AG04449 (cell line): ENCODE measurements at regions of chr18 and their contacts with region 1.

Region 1: DNA sequence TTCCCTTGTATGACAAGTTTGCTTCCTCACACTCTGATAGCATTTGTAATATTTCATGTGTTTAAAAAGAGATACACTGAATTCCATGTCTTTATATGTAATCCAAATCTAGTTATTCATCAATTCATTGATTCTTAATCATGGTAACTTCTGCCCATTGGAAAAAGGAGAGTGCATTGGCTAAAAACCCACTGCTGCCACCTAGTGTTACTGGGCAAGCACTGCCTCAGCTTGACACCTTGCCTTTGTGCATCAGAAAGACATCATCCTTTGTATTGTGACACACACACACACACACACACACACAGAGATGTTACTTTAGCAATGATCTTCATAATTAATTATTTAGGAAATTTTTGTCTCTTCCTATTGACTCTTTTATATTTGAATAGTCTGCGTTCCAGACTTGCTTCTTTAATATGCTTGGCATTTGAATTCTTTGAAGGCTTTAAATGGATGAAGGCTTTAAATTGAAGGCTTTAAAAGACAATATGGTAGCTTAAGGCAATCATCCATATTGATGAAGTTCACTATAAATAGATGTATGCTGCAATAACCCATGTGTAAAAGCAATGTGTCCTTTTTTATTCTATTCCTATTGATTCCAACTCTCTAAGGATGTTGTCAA is 414.2 kb upstream of the CHST9 start:
- DNase-seq: no peak
- H3K4me3 ChIP-seq: no peak overlapping the region
- CTCF ChIP-seq: peak; percentile 89

Region 2: GRCh38 chr18:27017901-27018500 is 581.3 kb before region 1 on chr18:
- CTCF ChIA-PET with region 1: interaction called, 10 read pairs
- POLR2A ChIA-PET with region 1: no interaction called
- DNase-seq: no peak
- H3K4me3 ChIP-seq: no peak overlapping the region
- CTCF ChIP-seq: peak; percentile 28

Region 3: DNA sequence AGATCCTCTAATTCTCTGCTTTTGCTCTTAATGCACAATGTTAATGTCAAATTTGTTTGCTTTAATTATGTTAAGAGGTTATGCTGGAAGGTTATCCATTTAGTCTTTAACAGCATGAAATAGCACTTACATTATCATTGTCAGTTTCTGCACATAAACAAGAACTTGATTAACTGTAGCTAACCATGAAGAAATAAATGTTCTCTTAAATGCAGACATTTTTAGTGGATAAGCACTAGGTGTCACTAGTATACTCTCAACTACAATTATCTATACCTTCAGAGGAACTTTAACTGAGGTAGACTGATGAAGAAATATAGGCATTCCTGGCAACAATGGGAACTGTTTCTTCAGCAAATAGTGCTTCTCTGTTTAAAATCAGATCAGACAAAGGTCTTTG is 235.4 kb before region 1 on chr18:
- CTCF ChIA-PET with region 1: interaction called, 20 read pairs
- POLR2A ChIA-PET with region 1: no interaction called
- DNase-seq: no peak
- H3K4me3 ChIP-seq: no peak overlapping the region
- CTCF ChIP-seq: no peak

Region 4: DNA sequence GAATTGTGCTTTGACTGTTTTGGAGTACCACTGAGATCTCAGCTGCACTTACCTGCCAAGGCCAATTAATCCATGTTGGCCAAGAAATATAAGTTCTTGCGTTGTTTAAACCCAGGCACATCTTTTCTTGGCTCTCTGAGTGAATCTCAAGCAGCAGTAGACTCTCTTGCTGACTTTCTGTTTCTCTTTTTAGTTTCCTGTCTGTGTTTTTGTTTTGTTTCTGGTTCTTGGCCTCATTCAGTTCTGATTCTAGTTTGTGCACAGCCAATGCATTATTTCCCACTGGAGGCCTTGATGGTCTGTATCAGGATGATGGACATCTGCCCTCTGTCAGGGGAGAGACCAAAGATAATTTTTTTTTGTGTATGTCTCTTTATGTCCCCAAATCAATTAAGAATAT is 198.2 kb after region 1 on chr18:
- CTCF ChIA-PET with region 1: no interaction called
- POLR2A ChIA-PET with region 1: no interaction called
- DNase-seq: no peak
- H3K4me3 ChIP-seq: no peak overlapping the region
- CTCF ChIP-seq: no peak